ENCODE measurements at regions of chr18 and their contacts with region 1.

Region 1: DNA sequence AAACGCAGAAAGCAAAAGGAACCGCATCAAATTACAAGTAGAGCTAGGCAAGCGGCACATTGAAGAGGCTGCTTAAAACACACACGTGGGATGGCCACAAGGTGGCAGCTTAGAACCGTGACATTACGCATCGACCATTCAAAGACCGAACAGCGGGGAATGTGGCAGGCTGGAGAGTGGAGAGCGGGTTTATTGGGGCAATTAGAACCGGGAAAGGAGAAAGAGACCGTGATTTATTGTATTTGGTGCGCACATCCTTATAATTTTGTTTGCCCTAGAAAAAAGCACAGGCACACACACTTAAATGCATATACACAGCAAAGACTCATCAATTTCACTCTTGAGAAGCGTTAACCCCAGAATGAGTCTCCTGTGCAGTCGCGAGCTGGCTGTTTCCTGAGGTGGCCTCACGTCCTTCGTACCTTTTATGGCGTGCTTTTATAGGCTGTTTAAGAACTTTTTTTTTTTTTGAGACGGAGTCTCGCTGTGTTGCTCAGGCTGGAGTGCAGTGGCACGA is 31.7 kb upstream of the MEP1B start:
- DNase-seq: peak; percentile 80
- H3K4me3 Mint-ChIP-seq: peak overlapping the region; percentile 49
- H3K27ac Mint-ChIP-seq: no peak overlapping the region
- H3K4me1 Mint-ChIP-seq: peaks cover 5% of the 10 kb centered on the region
- H3K27me3 Mint-ChIP-seq: no peaks in the 10 kb centered on the region

Region 2: DNA sequence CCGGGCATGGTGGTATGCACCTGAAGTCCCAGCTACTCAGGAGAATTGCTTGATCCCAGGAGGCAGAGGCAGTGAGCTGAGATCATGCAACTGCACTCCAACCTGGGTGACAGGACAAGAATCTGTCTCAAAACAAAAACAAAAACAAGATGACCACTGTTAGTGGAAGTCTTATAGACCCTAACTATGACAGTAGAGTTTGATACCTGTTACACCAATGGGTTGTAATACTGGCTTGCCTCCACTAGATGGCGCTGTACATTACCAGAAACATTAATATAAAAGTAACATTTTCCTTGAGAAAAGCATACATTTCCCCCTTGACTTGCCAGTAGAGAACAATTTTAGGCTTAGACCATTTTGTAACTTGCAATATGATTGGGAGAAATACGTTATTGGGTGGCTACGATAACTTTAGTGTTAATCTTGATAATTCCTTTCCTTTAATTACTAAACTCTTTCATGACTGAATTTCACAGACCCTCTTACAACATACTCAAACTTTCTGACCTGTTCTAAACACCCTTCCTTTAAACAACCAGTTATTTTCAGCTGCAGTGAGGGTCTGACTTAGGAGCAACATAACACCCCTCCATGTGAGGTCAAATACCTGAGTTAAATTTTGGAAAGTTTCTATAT is 416.9 kb before region 1 on chr18:
- CTCF ChIA-PET with region 1: no interaction called
- intact Hi-C with region 1: loop called (anchors 1 kb)
- DNase-seq: peak; percentile 78
- H3K4me3 Mint-ChIP-seq: no peak overlapping the region
- H3K27ac Mint-ChIP-seq: no peak overlapping the region
- H3K4me1 Mint-ChIP-seq: no peaks in the 10 kb centered on the region
- H3K27me3 Mint-ChIP-seq: no peaks in the 10 kb centered on the region

Region 3: GRCh38 chr18:32289483-32290075 is 131.4 kb after region 1 on chr18:
- CTCF ChIA-PET with region 1: interaction called, 13 read pairs
- intact Hi-C with region 1: loop called (anchors 1 kb)
- DNase-seq: peak; percentile 64
- H3K4me3 Mint-ChIP-seq: no peak overlapping the region
- H3K27ac Mint-ChIP-seq: no peak overlapping the region
- H3K4me1 Mint-ChIP-seq: no peaks in the 10 kb centered on the region
- H3K27me3 Mint-ChIP-seq: peaks cover 9% of the 10 kb centered on the region

Region 4: DNA sequence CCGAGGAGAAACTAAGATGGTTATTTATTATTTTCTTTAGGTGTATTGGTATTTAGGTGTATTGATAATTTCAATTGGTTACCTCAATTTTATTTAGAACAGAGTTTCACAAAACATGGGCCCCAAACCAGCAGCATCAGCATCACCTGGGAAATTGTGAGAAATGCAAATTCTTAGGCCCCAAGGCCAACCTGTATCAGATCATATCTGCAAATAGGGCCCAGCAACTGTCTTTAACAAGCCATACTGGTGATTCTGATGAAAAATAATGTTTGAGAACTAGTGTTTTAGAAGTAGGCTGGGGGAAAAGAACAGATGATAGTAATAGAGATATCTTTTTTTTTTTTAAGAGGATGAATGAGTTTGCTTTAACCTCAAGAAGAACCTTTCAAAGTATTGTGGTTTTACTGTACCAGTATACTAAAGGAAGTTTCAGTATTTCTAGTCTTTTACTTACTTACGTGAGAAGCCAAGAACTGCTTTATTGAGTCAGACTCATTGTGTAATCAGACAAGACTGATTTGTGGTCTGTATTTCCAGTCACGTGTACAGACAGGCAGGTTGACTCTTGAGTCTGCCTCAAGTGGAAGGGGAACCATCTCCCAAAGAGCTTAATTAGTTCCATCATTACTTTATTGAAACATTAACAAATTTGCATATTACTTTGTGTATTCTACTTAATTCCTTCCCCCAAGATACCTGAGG is 372.9 kb after region 1 on chr18:
- CTCF ChIA-PET with region 1: interaction called, 4 read pairs
- intact Hi-C with region 1: loop called (anchors 1 kb)
- DNase-seq: peak; percentile 40
- H3K4me3 Mint-ChIP-seq: no peak overlapping the region
- H3K27ac Mint-ChIP-seq: peak overlapping the region; percentile 9
- H3K4me1 Mint-ChIP-seq: peaks cover 17% of the 10 kb centered on the region
- H3K27me3 Mint-ChIP-seq: peaks cover 13% of the 10 kb centered on the region

Region 5: GRCh38 chr18:33231474-33232317 is 1073.5 kb after region 1 on chr18:
- CTCF ChIA-PET with region 1: no interaction called
- intact Hi-C with region 1: loop called (anchors 10 kb)
- DNase-seq: peak; percentile 76
- H3K4me3 Mint-ChIP-seq: no peak overlapping the region
- H3K27ac Mint-ChIP-seq: no peak overlapping the region
- H3K4me1 Mint-ChIP-seq: peaks cover 4% of the 10 kb centered on the region
- H3K27me3 Mint-ChIP-seq: no peaks in the 10 kb centered on the region

Measured in activated naive CD4-positive, alpha-beta T cell treated with anti-CD3 and anti-CD28 coated beads for 36 hours (primary cell).